Activated B cell treated with CpG ODN at 0.5 μM for 24 hours (primary cell): ENCODE measurements at regions of chr11 and their contacts with region 1.

Region 1: GRCh38 chr11:6389921-6390724 is at the start of gene SMPD1:
- DNase-seq: peak; percentile 86
- ATAC-seq: peak; percentile 93
- H3K4me3 Mint-ChIP-seq: peak within 1 kb of the TSS; percentile 95
- H3K27ac Mint-ChIP-seq: peak within 1 kb of the TSS; percentile 99
- H3K4me1 Mint-ChIP-seq: peaks cover 36% of the 10 kb centered on the region
- H3K27me3 Mint-ChIP-seq: no peaks in the 10 kb centered on the region
- CTCF ChIP-seq: no peak
- total RNA-seq, gene SMPD1: 14.1 and 16.9 TPM in 2 replicates

Region 2: DNA sequence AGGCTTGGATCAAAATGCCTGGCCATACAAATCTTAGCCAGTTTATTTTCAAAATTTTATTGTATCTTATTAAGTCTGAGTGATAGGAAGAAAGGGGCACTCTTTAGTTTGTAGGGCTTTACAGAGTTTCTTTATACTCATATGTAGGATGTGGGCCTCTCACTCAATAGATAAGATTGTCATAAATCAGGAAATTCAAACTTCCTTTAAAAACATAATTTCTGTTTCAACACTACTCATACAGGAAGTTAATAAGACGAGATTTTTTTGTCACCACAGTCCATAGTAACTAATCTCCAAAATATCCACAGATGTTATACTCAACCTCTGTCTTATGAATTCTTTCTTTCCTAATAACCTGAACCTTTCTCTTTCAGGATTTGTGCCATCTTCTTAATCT is 295.9 kb before region 1 on chr11:
- CTCF ChIA-PET with region 1: no interaction called
- POLR2A ChIA-PET with region 1: no interaction called
- intact Hi-C with region 1: no loop called
- DNase-seq: no peak
- ATAC-seq: no peak
- H3K4me3 Mint-ChIP-seq: no peak overlapping the region
- H3K27ac Mint-ChIP-seq: no peak overlapping the region
- H3K4me1 Mint-ChIP-seq: no peaks in the 10 kb centered on the region
- H3K27me3 Mint-ChIP-seq: peaks cover 7% of the 10 kb centered on the region
- CTCF ChIP-seq: no peak

Region 3: GRCh38 chr11:6234387-6235107 is 155.6 kb before region 1 on chr11 and contains the start of gene FHIP1B:
- CTCF ChIA-PET with region 1: no interaction called
- POLR2A ChIA-PET with region 1: interaction called, 6 read pairs
- intact Hi-C with region 1: loop called (anchors 1 kb)
- DNase-seq: peak; percentile 95
- ATAC-seq: peak; percentile 93
- H3K4me3 Mint-ChIP-seq: peak within 1 kb of the TSS; percentile 99
- H3K27ac Mint-ChIP-seq: peak within 1 kb of the TSS; percentile 92
- H3K4me1 Mint-ChIP-seq: peaks cover 32% of the 10 kb centered on the region
- H3K27me3 Mint-ChIP-seq: peaks cover 3% of the 10 kb centered on the region
- CTCF ChIP-seq: no peak
- total RNA-seq, gene FHIP1B: 27.7 and 32.8 TPM in 2 replicates

Region 4: DNA sequence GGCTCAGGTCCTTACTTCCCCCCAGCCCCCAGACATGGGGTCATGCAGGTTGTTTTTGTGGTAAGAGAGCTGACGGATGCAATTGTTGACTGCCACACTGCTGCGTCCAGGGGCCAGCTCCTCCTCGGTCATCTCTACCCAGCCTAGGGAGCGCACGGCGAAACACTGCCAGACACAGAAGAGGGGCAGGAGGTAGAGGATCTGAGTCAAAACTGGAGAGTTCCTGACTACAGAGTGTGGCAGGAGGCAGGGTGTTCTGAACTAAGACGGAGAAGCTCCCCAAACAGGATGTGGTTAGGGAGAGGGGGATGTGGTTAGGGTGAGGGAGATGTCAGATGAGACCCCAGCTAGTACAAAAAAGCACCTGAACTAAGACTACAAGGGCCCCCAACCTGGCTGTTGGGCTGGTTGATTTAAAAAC is 12.4 kb after region 1 on chr11:
- CTCF ChIA-PET with region 1: no interaction called
- POLR2A ChIA-PET with region 1: interaction called, 45 read pairs
- intact Hi-C with region 1: loop called (anchors 1 kb)
- DNase-seq: peak; percentile 30
- ATAC-seq: peak; percentile 90
- H3K4me3 Mint-ChIP-seq: peak overlapping the region; percentile 75
- H3K27ac Mint-ChIP-seq: peak overlapping the region; percentile 85
- H3K4me1 Mint-ChIP-seq: peaks cover 53% of the 10 kb centered on the region
- H3K27me3 Mint-ChIP-seq: no peaks in the 10 kb centered on the region
- CTCF ChIP-seq: no peak

Region 5: DNA sequence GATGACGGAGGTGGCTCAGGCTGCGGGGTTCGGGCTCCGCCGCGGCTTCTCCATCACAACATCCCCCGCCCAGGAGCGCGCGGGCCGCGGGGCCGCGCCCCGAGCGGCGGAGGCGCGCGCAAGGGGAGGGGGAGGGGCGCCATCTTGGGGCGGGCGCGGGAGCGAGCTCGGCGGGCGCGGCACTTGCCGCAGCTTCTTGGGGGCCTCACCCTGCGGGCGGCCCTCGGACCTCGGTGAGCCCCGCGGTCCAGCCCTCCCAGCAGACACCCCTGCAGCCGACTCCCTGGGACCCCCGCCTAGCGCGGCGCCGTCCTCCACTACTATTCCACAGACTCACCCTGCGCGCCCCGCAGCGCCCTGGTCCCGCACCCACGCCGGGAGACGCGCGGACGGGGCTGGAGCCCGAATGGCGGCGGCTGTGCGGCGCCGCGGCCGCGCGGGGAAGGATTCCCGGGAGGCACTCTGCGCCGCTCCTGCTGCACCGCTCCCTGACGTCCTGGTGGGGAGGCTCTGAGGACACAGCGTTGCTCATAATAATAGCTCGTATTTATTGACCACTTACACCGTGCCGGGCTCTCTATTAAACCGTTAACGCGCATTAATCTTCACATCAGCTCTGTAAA is 29.0 kb after region 1 on chr11 and contains the start of gene APBB1:
- CTCF ChIA-PET with region 1: no interaction called
- POLR2A ChIA-PET with region 1: interaction called, 29 read pairs
- intact Hi-C with region 1: loop called (anchors 1 kb)
- DNase-seq: peak; percentile 76
- ATAC-seq: peak; percentile 80
- H3K4me3 Mint-ChIP-seq: peak within 1 kb of the TSS; percentile 80
- H3K27ac Mint-ChIP-seq: peak within 1 kb of the TSS; percentile 71
- H3K4me1 Mint-ChIP-seq: peaks cover 4% of the 10 kb centered on the region
- H3K27me3 Mint-ChIP-seq: peaks cover 27% of the 10 kb centered on the region
- CTCF ChIP-seq: no peak
- total RNA-seq, gene APBB1: 20.6 and 22.1 TPM in 2 replicates

Region 6: DNA sequence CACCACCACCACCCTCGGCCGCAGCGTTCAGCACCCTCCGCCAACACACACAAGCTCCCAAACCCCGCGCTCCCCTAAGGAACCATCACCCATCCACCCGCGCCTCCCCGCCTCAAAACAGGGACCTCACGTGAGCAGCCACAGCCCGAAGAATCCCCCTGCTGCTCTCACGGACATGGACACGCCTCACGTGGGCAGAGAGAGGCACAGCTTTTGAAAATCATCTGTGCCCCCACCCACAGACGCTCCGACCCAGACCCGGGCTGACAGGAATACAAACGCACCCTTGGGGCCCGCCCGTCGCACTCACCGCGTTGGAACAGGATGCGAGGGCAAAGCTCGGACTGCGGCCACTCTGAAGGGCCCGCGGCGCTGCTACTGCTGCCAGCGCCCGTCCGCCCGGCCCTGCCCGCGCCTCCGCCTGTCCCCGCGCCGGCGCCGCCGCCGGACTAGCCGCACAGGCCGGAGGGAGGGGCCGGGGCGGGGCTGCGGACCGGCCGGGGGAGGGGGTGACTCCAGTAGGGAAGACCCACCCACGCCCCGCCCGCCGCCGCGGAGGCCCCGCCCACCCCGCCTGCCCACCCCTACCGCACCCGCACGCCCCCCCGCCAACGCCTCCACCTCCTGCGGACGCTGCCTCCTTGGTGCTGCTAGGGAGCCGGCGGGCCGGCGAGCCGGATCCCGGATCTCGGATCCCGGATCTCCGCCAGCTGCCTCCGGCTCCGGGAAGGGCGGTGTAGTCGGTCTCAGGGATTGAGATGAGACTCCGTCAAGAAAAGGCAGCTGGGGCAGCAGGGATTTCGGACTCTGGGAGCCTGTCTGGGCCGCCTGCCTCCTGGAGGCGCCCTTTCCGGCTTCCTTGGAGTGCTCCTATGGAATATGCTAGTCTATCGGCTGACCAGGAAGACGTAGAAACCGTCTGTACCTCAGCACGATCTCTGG is 83.6 kb after region 1 on chr11 and contains the start of gene TRIM3:
- CTCF ChIA-PET with region 1: no interaction called
- POLR2A ChIA-PET with region 1: interaction called, 10 read pairs
- intact Hi-C with region 1: loop called (anchors 1 kb)
- DNase-seq: peak; percentile 75
- ATAC-seq: peak; percentile 91
- H3K4me3 Mint-ChIP-seq: peak within 1 kb of the TSS; percentile 86
- H3K27ac Mint-ChIP-seq: peak within 1 kb of the TSS; percentile 82
- H3K4me1 Mint-ChIP-seq: peaks cover 17% of the 10 kb centered on the region
- H3K27me3 Mint-ChIP-seq: no peaks in the 10 kb centered on the region
- CTCF ChIP-seq: no peak
- total RNA-seq, gene TRIM3: 8.3 and 9.0 TPM in 2 replicates

Region 7: GRCh38 chr11:6619004-6619745 is 229.1 kb after region 1 on chr11 and contains the start of gene TPP1:
- CTCF ChIA-PET with region 1: no interaction called
- POLR2A ChIA-PET with region 1: interaction called, 4 read pairs
- intact Hi-C with region 1: loop called (anchors 2 kb)
- DNase-seq: peak; percentile 87
- ATAC-seq: peak; percentile 89
- H3K4me3 Mint-ChIP-seq: no peak within 1 kb of the TSS
- H3K27ac Mint-ChIP-seq: no peak within 1 kb of the TSS
- H3K4me1 Mint-ChIP-seq: peaks cover 7% of the 10 kb centered on the region
- H3K27me3 Mint-ChIP-seq: no peaks in the 10 kb centered on the region
- CTCF ChIP-seq: no peak
- total RNA-seq, gene TPP1: 98.2 and 123 TPM in 2 replicates

Region 8: GRCh38 chr11:6943131-6943530 is 553.0 kb after region 1 on chr11:
- CTCF ChIA-PET with region 1: no interaction called
- POLR2A ChIA-PET with region 1: no interaction called
- intact Hi-C with region 1: no loop called
- DNase-seq: no peak
- ATAC-seq: no peak
- H3K4me3 Mint-ChIP-seq: no peak overlapping the region
- H3K27ac Mint-ChIP-seq: no peak overlapping the region
- H3K4me1 Mint-ChIP-seq: no peaks in the 10 kb centered on the region
- H3K27me3 Mint-ChIP-seq: no peaks in the 10 kb centered on the region
- CTCF ChIP-seq: no peak